ENCODE measurements at regions of chr2 and their contacts with region 1.

Region 1: GRCh38 chr2:240714747-240715725 is 23.4 kb downstream of the AQP12A start:
- DNase-seq: no peak
- H3K4me3 ChIP-seq: no peak overlapping the region
- H3K27ac ChIP-seq: no peak overlapping the region
- H3K4me1 ChIP-seq: no peaks in the 10 kb centered on the region; a peak in 1 of 7 replicates
- H3K27me3 ChIP-seq: no peaks in the 10 kb centered on the region
- CTCF ChIP-seq: peak in 2 of 3 experiments; percentile 31 to 47; a peak in 2 of 4 replicates
- EP300 ChIP-seq: no peak
- POLR2A ChIP-seq: no peak
- RAD21 ChIP-seq: peak in 1 of 2 experiments; percentile 16; a peak in 1 of 4 replicates

Region 2: GRCh38 chr2:240725671-240726070 is 10.6 kb after region 1 on chr2:
- CTCF ChIA-PET with region 1: interaction called, 7 read pairs
- POLR2A ChIA-PET with region 1: interaction called, 19 read pairs
- DNase-seq: no peak
- H3K4me3 ChIP-seq: no peak overlapping the region
- H3K27ac ChIP-seq: no peak overlapping the region
- H3K4me1 ChIP-seq: no peaks in the 10 kb centered on the region
- H3K27me3 ChIP-seq: no peaks in the 10 kb centered on the region
- CTCF ChIP-seq: no peak
- EP300 ChIP-seq: no peak
- POLR2A ChIP-seq: 0 out of 3 replicates have a peak, but pooled peaks of 1 of the 2 experiments have one; percentile 1
- RAD21 ChIP-seq: no peak

Region 3: GRCh38 chr2:240731178-240731545 is 16.1 kb after region 1 on chr2:
- CTCF ChIA-PET with region 1: interaction called, 7 read pairs
- POLR2A ChIA-PET with region 1: interaction called, 19 read pairs
- DNase-seq: no peak
- H3K4me3 ChIP-seq: no peak overlapping the region
- H3K27ac ChIP-seq: no peak overlapping the region
- H3K4me1 ChIP-seq: no peaks in the 10 kb centered on the region; a peak in 1 of 7 replicates
- H3K27me3 ChIP-seq: no peaks in the 10 kb centered on the region
- CTCF ChIP-seq: no peak
- EP300 ChIP-seq: no peak
- POLR2A ChIP-seq: no peak
- RAD21 ChIP-seq: no peak

Region 4: GRCh38 chr2:240856151-240856980 is 141.3 kb after region 1 on chr2:
- CTCF ChIA-PET with region 1: no interaction called
- POLR2A ChIA-PET with region 1: no interaction called
- DNase-seq: peak; percentile 27 to 79
- H3K4me3 ChIP-seq: no peak overlapping the region
- H3K27ac ChIP-seq: no peak overlapping the region
- H3K4me1 ChIP-seq: no peaks in the 10 kb centered on the region; a peak in 1 of 7 replicates
- H3K27me3 ChIP-seq: no peaks in the 10 kb centered on the region
- CTCF ChIP-seq: peak in 2 of 3 experiments; percentile 88 to 98; a peak in 3 of 4 replicates
- EP300 ChIP-seq: no peak
- POLR2A ChIP-seq: no peak
- RAD21 ChIP-seq: peak; percentile 67 to 74

Measured in H1 (cell line).